Activated CD8-positive, alpha-beta T cell treated with anti-CD3 and anti-CD28 coated beads, Interleukin-2, amount 10 ng/mL, durations not matched to agents 7 days and 5 days (primary cell): ENCODE measurements at regions of chr17 and their contacts with region 1.

Region 1: DNA sequence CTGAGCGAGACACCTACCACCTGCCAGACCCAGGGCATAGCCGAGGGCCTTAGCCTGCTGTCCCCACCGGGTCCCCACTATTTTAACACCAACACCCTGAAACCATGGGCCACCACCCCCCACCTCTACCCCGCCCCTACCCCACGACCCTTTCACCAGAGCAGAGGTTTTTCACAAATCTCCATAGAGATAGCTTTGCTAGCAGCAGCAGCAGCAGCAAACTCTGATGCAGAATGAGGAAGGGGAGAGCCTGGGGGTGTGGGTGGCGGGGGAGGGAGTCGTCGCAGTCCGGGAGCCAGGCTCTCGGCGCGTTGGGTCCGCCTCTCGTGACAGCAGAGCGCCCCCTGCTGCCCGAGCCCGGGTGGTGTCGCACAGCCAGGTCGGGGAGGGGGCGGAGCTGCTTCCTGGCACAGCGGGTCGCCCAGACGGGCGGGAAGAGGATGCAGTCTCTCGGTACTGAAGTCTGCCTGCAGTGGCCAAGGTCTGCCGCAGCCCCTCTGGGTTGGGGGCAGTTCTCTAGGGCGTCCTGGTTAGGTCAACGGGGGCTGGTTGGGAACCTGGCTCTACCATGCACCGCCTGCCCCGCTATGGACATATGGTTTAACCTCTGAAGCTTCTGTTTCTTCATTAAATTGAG is 38.1 kb upstream of the CCDC182 start:
- DNase-seq: peak; percentile 86
- ATAC-seq: peak; percentile 97
- H3K4me3 Mint-ChIP-seq: no peak overlapping the region
- H3K27ac Mint-ChIP-seq: no peak overlapping the region
- H3K4me1 Mint-ChIP-seq: no peaks in the 10 kb centered on the region
- H3K27me3 Mint-ChIP-seq: peaks cover 22% of the 10 kb centered on the region

Region 2: DNA sequence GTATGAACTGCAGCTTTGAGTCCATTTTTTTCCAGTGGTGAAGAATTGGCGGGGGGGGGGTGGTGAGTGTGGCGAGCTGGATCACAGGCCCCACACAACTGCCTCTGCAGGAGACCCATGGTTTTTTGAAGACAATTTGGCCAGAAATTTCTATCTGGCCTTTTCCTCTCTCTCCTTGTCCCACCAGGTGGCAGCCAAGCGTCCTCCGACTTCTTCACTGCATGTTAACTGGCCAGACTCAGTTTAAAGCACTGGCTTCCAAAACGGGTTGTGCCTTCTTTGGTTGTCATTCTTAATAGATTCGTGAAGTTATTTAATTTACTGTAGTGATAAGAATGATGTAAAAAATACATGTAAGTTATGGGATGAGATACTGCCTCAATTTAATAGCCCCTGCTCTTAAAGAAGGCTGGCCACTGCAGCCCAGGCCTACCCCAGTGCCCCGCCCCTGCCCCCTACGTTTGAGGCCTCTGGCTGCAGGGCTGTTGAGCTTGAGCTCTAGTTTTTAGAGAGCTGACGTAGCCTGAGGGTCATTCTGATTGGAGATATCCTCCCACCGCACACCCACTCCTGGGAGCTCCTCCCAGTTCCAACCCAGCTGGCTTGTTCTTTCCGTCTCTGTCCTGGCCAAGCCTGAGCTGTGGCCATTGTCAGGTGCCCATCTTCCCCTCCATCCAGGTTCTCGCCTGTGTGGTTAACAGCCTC is 661.7 kb before region 1 on chr17:
- CTCF ChIA-PET with region 1: interaction called, 10 read pairs
- POLR2A ChIA-PET with region 1: no interaction called
- DNase-seq: peak; percentile 31
- ATAC-seq: no peak
- H3K4me3 Mint-ChIP-seq: no peak overlapping the region
- H3K27ac Mint-ChIP-seq: no peak overlapping the region
- H3K4me1 Mint-ChIP-seq: peaks cover 3% of the 10 kb centered on the region
- H3K27me3 Mint-ChIP-seq: no peaks in the 10 kb centered on the region

Region 3: GRCh38 chr17:57622683-57623433 is 160.4 kb before region 1 on chr17:
- CTCF ChIA-PET with region 1: no interaction called
- POLR2A ChIA-PET with region 1: no interaction called
- DNase-seq: no peak
- ATAC-seq: no peak
- H3K4me3 Mint-ChIP-seq: no peak overlapping the region
- H3K27ac Mint-ChIP-seq: peak overlapping the region; percentile 27
- H3K4me1 Mint-ChIP-seq: peaks cover 41% of the 10 kb centered on the region
- H3K27me3 Mint-ChIP-seq: no peaks in the 10 kb centered on the region

Region 4: DNA sequence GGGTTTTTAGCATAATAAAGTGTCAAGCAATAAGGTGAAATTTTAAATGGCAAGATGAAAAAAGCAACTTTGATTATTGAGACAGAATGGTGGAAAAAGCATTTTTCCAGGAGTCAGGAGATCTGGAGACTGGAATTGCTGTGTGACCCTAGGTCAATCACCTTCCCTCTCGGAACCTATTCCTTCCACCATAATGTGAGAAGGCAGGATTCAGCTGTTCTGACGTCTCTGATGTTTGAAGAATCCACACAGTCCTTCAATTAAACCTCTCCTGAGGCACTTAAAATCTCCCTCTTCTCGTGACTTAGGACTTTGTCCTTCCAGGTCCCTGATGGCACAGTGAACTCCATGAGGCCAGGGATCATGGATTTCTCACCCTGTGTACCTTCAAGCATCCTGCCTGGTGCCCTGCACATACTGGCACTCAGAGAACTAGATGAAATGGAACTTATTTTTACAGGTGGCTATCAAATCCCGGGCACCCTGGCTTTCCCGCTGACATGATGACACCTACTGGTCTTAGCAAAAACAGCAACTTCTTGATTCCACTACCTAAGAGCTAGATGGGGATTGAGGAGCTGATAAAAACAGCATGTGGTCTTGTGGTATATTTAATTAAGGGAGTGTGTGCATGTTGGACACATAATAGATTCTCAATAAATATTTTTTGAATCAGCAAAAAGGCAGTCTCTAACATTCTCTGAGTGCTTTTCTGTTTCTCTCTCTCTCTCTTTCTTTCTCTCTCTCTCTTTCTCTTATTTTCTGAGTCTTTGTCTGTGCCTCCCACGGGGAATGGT is 35.8 kb before region 1 on chr17:
- CTCF ChIA-PET with region 1: interaction called, 23 read pairs
- POLR2A ChIA-PET with region 1: no interaction called
- DNase-seq: peak; percentile 68
- ATAC-seq: peak; percentile 77
- H3K4me3 Mint-ChIP-seq: no peak overlapping the region
- H3K27ac Mint-ChIP-seq: no peak overlapping the region
- H3K4me1 Mint-ChIP-seq: peaks cover 29% of the 10 kb centered on the region
- H3K27me3 Mint-ChIP-seq: peaks cover 7% of the 10 kb centered on the region

Region 5: DNA sequence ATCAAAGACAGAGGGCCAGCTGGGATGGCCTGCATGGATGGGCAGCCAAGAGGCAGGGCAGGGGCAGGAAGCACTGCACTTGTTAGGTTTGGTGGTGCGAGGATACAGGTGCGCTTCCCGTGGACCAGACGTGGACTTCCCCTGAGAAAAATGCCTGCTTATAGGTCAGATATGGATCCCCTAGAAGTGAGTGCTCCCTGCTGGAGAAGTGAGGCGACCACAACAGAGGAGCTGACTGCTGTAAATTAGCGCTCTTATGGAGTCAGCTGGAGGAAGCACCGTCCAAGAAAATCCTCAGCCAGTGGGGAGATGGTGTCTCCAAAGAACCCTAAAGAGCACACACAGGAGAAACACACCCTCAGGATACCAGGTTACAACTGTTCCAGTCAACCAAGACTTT is 10.4 kb before region 1 on chr17:
- CTCF ChIA-PET with region 1: interaction called, 20 read pairs
- POLR2A ChIA-PET with region 1: no interaction called
- DNase-seq: no peak
- ATAC-seq: no peak
- H3K4me3 Mint-ChIP-seq: no peak overlapping the region
- H3K27ac Mint-ChIP-seq: no peak overlapping the region
- H3K4me1 Mint-ChIP-seq: no peaks in the 10 kb centered on the region
- H3K27me3 Mint-ChIP-seq: peaks cover 66% of the 10 kb centered on the region

Region 6: DNA sequence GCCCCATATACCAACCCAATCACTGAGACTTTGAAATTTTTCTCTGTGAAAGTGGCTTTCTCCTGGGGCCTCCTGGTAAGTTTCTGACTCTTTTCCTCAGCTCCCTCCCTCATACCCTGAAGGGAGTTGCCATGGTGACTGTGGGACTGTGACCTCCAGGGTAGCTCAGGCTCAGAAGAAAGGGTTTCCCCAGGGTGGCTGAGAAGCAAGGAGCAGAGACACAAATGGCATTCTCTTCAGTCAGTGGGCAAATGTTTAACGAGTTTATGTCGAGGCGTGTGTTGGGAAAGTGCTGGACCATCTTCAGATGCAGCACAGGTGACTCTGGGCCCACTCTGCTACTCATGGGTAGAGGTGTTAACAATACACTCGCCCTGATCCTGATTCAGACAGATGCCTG is 19.8 kb after region 1 on chr17:
- CTCF ChIA-PET with region 1: interaction called, 17 read pairs
- POLR2A ChIA-PET with region 1: no interaction called
- DNase-seq: no peak
- ATAC-seq: no peak
- H3K4me3 Mint-ChIP-seq: no peak overlapping the region
- H3K27ac Mint-ChIP-seq: no peak overlapping the region
- H3K4me1 Mint-ChIP-seq: no peaks in the 10 kb centered on the region
- H3K27me3 Mint-ChIP-seq: peaks cover 30% of the 10 kb centered on the region

Region 7: DNA sequence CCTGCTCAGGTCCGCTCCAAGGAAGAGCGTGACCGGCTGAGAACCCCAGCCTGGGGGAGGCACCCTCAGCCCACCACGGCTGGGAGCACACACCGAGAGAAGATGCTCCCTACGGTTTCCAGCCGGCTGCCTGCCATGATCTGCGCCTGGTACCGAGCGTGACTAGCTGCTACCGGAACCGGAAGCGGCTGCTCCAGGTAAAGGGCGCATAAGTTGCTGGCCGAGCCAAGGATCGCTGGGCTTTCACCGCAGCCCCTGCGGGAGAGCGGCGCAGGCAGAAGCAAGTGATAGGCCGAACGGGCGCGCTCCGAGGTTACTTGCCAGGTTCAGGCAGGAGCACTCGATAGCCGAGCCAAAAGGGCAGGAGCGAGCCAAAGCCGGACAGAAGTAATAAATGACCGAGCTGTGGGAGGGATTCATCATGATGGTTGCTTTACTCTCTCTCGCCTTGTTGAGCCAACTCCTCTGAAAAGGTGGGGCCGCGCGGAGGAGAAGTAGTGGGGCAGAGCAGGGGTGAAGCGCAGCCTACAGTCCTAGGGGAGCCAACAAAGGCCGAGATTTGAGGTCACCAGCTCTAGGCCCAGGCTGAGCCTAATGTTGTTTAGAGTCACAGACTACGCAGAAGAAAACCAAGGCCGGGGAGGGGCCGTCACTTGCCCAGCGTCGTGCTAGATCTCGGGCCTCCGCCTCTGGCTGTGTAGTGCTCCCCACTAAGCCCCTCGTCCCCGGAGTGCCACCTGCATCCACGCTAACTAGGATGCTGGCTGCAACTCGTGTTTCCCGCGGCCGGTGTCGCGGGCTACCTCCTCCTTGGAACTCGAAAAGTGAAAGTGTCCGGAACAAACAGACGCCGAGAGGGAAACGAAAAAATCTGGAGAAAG is 66.9 kb after region 1 on chr17 and contains the start of gene MRPS23:
- CTCF ChIA-PET with region 1: no interaction called
- POLR2A ChIA-PET with region 1: no interaction called
- DNase-seq: peak; percentile 98
- ATAC-seq: peak; percentile 93
- H3K4me3 Mint-ChIP-seq: peak within 1 kb of the TSS; percentile 97
- H3K27ac Mint-ChIP-seq: peak within 1 kb of the TSS; percentile 99
- H3K4me1 Mint-ChIP-seq: peaks cover 40% of the 10 kb centered on the region
- H3K27me3 Mint-ChIP-seq: no peaks in the 10 kb centered on the region
- total RNA-seq, gene MRPS23: 46.3 to 48.7 TPM